Ascending aorta (tissue), 2 donors: ENCODE measurements at regions of chr22 and their contacts with region 1.

Region 1: GRCh38 chr22:32265882-32266767 is 11.0 kb upstream of the SLC5A4 start:
- DNase-seq: peak in 1 of 2 donors; percentile 82
- H3K4me3 ChIP-seq: peak overlapping the region in 1 of 2 donors; percentile 33
- H3K27ac ChIP-seq: peak overlapping the region in 1 of 2 donors; percentile 19
- H3K4me1 ChIP-seq: no peaks in the 10 kb centered on the region
- H3K27me3 ChIP-seq: no peaks in the 10 kb centered on the region
- CTCF ChIP-seq: peak; percentile 47 to 78 (median 66)

Region 2: DNA sequence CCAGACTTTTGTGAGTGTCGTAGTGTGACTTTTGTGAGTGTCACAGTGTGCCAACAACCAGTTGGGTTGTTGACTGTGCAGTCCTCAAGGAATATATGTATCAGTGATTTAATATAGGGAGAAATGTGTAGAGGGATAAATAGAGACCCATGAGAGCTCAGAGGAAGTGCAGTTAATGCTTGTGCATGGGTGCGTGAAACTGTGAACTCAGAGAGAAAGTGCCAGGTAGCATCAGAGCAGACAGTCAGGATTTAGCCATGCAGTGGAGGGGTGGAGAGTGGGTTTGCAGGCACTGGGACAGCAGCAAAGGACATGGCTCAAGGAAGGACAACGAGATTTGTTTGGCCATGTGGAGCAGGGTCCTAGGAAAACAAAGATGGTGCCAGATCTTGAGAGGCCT is 288.2 kb before region 1 on chr22:
- intact Hi-C with region 1: loop called (anchors 2 kb)
- DNase-seq: no peak
- H3K4me3 ChIP-seq: no peak overlapping the region
- H3K27ac ChIP-seq: no peak overlapping the region
- H3K4me1 ChIP-seq: no peaks in the 10 kb centered on the region
- H3K27me3 ChIP-seq: no peaks in the 10 kb centered on the region
- CTCF ChIP-seq: no peak

Region 3: GRCh38 chr22:32281072-32281471 is 14.9 kb after region 1 on chr22:
- intact Hi-C with region 1: no loop called
- DNase-seq: no peak
- H3K4me3 ChIP-seq: no peak overlapping the region
- H3K27ac ChIP-seq: no peak overlapping the region
- H3K4me1 ChIP-seq: no peaks in the 10 kb centered on the region
- H3K27me3 ChIP-seq: no peaks in the 10 kb centered on the region
- CTCF ChIP-seq: no peak